ENCODE measurements at regions of chr13 and their contacts with region 1.

Region 1: DNA sequence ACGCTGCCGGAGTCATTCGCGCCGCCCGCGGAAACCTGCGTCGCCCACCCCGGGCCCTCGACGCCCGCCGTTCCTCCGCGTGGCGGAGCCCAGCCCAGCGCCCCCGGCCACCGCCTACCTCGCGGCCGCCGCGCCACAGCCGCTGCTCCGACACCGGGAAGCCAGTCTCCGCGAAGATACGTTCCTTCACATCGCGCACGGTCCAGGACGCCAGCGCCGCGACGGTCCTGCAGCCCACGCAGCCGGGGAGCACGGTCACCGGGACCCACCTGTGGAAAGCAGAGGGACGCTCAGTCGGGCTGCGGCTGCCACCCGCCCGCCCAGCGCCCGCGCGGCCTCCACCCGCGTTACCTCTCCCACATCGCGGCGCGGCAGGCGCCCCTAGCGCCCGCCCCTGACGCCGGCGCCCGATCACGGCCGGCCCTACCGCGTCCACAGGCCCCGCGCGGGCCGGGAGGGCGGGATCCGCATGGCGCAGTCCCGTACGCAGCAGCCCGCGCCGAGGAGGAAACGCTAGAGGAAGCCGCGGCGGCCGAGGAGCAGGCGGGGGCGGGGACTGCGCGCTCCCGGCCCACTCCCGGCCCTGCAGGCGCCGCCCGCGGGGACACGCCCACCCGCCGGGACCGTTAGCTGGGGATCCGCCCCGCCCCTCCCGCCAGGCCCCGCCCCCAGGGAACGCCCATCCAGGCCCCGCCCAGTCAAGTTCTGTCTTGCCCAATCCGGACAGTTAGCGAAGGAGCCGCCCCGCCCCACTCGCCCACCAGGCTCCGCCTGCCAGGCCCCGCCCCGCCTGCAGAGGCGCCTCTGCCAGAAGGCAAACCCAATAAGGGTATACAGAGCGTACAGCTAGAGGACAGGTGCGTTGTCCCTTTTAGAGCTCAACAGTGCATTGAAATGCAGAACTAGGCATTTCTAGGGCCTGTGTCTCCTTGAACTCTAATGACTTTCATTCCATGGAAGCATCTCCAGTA is 58.2 kb downstream of the SACS start:
- DNase-seq: peak; percentile 91 to 96
- ATAC-seq: peak; percentile 90 to 97 (median 93)
- H3K4me3 ChIP-seq: peak overlapping the region; percentile 45
- H3K4me3 Mint-ChIP-seq: peak overlapping the region; percentile 74
- H3K27ac ChIP-seq: no peak overlapping the region
- H3K27ac Mint-ChIP-seq: peak overlapping the region in 1 of 2 donors; percentile 55
- H3K4me1 ChIP-seq: peaks cover 18% of the 10 kb centered on the region
- H3K4me1 Mint-ChIP-seq: peaks cover 16 to 20% of the 10 kb centered on the region in 2 donors
- H3K27me3 ChIP-seq: no peaks in the 10 kb centered on the region
- H3K27me3 Mint-ChIP-seq: peaks cover under 1 to 5% of the 10 kb centered on the region in 2 donors
- CTCF ChIP-seq: no peak

Region 2: GRCh38 chr13:23254506-23254905 is 120.8 kb before region 1 on chr13:
- intact Hi-C with region 1: no loop called
- DNase-seq: no peak
- ATAC-seq: no peak
- H3K4me3 ChIP-seq: no peak overlapping the region
- H3K4me3 Mint-ChIP-seq: no peak overlapping the region
- H3K27ac ChIP-seq: no peak overlapping the region
- H3K27ac Mint-ChIP-seq: no peak overlapping the region
- H3K4me1 ChIP-seq: no peaks in the 10 kb centered on the region
- H3K4me1 Mint-ChIP-seq: no peaks in the 10 kb centered on the region
- H3K27me3 ChIP-seq: no peaks in the 10 kb centered on the region
- H3K27me3 Mint-ChIP-seq: peaks cover 6 to 7% of the 10 kb centered on the region in 2 donors
- CTCF ChIP-seq: no peak

Region 3: DNA sequence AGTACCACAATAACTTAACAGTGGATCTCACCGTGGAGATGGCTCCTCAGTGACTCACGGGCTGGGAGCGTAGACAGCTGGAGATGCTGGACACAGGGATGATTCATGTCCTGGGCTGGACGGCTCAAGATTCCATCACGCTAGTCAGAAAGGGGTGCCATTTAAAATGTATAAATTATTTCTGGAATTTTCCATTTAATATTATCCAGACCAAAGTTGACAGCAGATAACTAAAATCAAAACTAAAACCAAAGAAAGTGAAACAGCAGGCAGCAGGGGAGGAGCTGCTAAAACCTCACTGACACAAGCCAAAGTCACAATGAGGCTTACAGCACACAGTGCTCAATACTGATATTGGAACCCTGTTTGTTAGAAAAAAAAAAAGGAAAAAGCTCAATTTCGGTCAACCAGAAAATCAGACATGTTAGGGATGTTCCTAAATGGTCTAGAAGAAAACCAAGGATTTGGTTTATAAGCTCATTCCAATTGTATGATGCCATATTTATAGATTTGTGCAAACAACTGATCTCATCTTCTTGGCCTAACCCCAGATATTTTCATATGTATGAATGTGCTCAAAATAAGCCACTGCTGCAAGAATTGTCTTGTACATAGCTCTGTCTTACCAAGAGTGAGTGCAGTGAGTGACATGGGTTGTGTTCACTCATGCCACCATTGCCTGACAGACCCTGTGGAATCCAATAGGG is 53.6 kb before region 1 on chr13:
- intact Hi-C with region 1: loop called (anchors 2 kb)
- DNase-seq: peak in 1 of 2 donors; percentile 39
- ATAC-seq: peak; percentile 79 to 85 (median 80)
- H3K4me3 ChIP-seq: peak overlapping the region; percentile 61
- H3K4me3 Mint-ChIP-seq: peak overlapping the region; percentile 98
- H3K27ac ChIP-seq: peak overlapping the region; percentile 63
- H3K27ac Mint-ChIP-seq: peak overlapping the region; percentile 89 to 93
- H3K4me1 ChIP-seq: peaks cover 22% of the 10 kb centered on the region
- H3K4me1 Mint-ChIP-seq: peaks cover 35 to 40% of the 10 kb centered on the region in 2 donors
- H3K27me3 ChIP-seq: no peaks in the 10 kb centered on the region
- H3K27me3 Mint-ChIP-seq: peaks cover 0 to 3% of the 10 kb centered on the region in 2 donors
- CTCF ChIP-seq: no peak

Region 4: GRCh38 chr13:23888658-23889614 is 513.6 kb after region 1 on chr13 and contains the start of gene MIPEP:
- intact Hi-C with region 1: loop called (anchors 2 kb)
- DNase-seq: peak; percentile 83 to 94
- ATAC-seq: peak; percentile 94 to 98 (median 97)
- H3K4me3 ChIP-seq: peak within 1 kb of the TSS; percentile 68
- H3K4me3 Mint-ChIP-seq: peak within 1 kb of the TSS; percentile 98
- H3K27ac ChIP-seq: peak within 1 kb of the TSS; percentile 36
- H3K27ac Mint-ChIP-seq: peak within 1 kb of the TSS; percentile 81 to 96
- H3K4me1 ChIP-seq: peaks cover 7% of the 10 kb centered on the region
- H3K4me1 Mint-ChIP-seq: peaks cover 21% of the 10 kb centered on the region in 2 donors
- H3K27me3 ChIP-seq: no peaks in the 10 kb centered on the region
- H3K27me3 Mint-ChIP-seq: no peaks in the 10 kb centered on the region
- CTCF ChIP-seq: peak; percentile 61
- total RNA-seq, gene MIPEP: 9.7 to 10.1 (median 9.7) TPM

Region 5: GRCh38 chr13:24160454-24161009 is 785.2 kb after region 1 on chr13 and contains the start of gene SPATA13:
- intact Hi-C with region 1: loop called (anchors 2 kb)
- DNase-seq: peak; percentile 86 to 96
- ATAC-seq: peak; percentile 98
- H3K4me3 ChIP-seq: peak within 1 kb of the TSS; percentile 55
- H3K4me3 Mint-ChIP-seq: peak within 1 kb of the TSS; percentile 90
- H3K27ac ChIP-seq: no peak within 1 kb of the TSS
- H3K27ac Mint-ChIP-seq: peak within 1 kb of the TSS in 1 of 2 donors; percentile 72
- H3K4me1 ChIP-seq: peaks cover 24% of the 10 kb centered on the region
- H3K4me1 Mint-ChIP-seq: peaks cover 14 to 26% of the 10 kb centered on the region in 2 donors
- H3K27me3 ChIP-seq: peaks cover 7% of the 10 kb centered on the region
- H3K27me3 Mint-ChIP-seq: peaks cover 15 to 25% of the 10 kb centered on the region in 2 donors
- CTCF ChIP-seq: no peak
- total RNA-seq, gene SPATA13: 108 to 141 (median 141) TPM

Region 6: DNA sequence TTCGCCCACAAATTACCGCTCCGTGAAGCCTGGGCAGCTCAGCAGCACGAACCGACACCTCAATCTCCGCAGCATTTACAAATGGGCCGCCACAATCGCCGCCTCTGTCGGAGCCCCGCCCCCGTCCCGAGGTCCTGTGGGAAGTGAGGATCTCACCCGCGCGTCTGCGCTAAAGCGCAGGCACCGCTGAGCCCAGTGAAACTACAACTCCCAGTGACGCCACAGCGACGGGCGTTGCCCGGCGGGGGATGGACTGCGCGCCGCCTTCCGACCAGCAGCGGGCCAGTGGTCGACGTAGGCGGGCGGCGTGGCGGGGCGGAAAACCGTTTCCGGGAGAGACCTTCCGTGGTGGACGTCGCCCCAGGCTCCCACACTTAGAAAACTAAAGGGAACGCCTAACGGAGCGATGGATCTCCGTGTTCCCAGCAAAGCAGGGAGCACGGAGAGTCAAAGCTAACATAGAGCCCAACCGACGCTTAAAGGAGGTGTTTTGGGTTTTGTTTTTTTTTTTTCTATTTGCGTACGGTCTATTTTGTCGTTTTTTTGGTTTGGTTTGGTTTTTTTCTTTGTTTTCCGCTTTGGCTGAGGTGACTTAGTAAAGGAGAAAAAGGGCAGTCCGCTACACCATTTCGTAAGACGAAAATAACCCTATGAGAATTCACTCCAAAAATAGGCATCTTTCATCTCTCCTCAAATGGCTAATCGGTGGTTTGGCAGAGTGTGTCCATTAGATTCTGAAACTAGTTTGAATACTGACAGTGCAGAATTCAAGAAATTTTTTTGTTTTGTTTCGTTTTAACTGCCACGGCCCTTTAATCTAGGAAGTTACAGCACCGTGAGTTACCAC is 1547.7 kb after region 1 on chr13:
- intact Hi-C with region 1: loop called (anchors 5 kb)
- DNase-seq: peak; percentile 87 to 95
- ATAC-seq: peak; percentile 98 to 100 (median 98)
- H3K4me3 ChIP-seq: peak overlapping the region; percentile 86
- H3K4me3 Mint-ChIP-seq: peak overlapping the region; percentile 96
- H3K27ac ChIP-seq: peak overlapping the region; percentile 97
- H3K27ac Mint-ChIP-seq: peak overlapping the region; percentile 94
- H3K4me1 ChIP-seq: peaks cover 5% of the 10 kb centered on the region
- H3K4me1 Mint-ChIP-seq: peaks cover 17 to 18% of the 10 kb centered on the region in 2 donors
- H3K27me3 ChIP-seq: no peaks in the 10 kb centered on the region
- H3K27me3 Mint-ChIP-seq: peaks cover 0 to 2% of the 10 kb centered on the region in 2 donors
- CTCF ChIP-seq: no peak